SK-N-SH (cell line): ENCODE measurements at regions of chr17 and their contacts with region 1.

Region 1: GRCh38 chr17:18960803-18961511 is 9.0 kb downstream of the SLC5A10 start:
- DNase-seq: peak; percentile 93
- H3K4me3 ChIP-seq: peak overlapping the region in 1 of 2 experiments; percentile 11; a peak in 1 of 4 replicates
- H3K27ac ChIP-seq: no peak overlapping the region
- H3K4me1 ChIP-seq: peaks cover 6 to 11% of the 10 kb centered on the region in 2 experiments; a peak in 2 of 4 replicates
- H3K27me3 ChIP-seq: no peaks in the 10 kb centered on the region
- CTCF ChIP-seq: peak; percentile 94
- EP300 ChIP-seq: no peak
- RAD21 ChIP-seq: peak; percentile 93

Region 2: DNA sequence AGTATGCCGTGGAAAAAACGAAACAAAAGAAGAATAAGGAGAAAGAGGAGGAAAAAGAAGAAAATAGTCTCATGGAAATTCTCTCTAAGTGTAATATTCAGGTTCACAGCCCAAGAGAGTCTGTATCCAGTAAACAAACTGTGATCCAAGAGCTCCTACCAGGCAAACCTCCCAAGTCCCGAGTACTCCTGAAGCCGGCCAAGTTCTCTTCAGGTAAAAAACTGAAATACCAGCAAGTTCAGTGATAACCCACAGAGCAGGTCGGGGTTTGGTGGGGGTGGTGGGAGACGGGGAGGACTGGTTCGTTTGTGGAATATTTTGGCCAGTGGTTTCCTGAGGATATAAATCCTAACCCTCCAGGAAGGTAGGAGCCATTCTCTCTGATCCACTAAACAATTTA is 188.5 kb before region 1 on chr17:
- CTCF ChIA-PET with region 1: no interaction called
- POLR2A ChIA-PET with region 1: no interaction called
- DNase-seq: no peak
- H3K4me3 ChIP-seq: no peak overlapping the region
- H3K27ac ChIP-seq: no peak overlapping the region
- H3K4me1 ChIP-seq: no peaks in the 10 kb centered on the region
- H3K27me3 ChIP-seq: no peaks in the 10 kb centered on the region
- CTCF ChIP-seq: no peak
- EP300 ChIP-seq: no peak
- RAD21 ChIP-seq: no peak

Region 3: DNA sequence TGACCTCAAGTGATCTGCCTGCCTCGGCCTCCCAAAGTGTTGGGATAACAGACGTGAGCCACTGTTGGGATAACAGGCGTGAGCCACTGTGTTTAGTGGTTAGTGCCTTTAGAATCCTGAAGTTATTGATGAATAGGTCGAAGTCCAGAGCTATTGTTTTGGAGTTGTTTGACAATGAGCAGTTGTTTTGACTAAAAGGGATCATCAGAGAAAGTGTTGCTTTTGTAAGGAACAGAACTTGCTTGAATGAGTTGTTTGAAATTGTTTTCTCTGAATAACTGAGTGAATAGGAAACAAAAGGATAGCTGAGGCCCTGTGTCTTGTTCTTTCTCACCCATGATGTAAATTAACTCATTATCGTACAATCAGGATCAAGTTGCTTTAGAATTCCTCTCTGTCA is 56.5 kb before region 1 on chr17:
- CTCF ChIA-PET with region 1: no interaction called
- POLR2A ChIA-PET with region 1: no interaction called
- DNase-seq: no peak
- H3K4me3 ChIP-seq: no peak overlapping the region
- H3K27ac ChIP-seq: no peak overlapping the region
- H3K4me1 ChIP-seq: no peaks in the 10 kb centered on the region
- H3K27me3 ChIP-seq: no peaks in the 10 kb centered on the region
- CTCF ChIP-seq: no peak
- EP300 ChIP-seq: no peak
- RAD21 ChIP-seq: no peak

Region 4: DNA sequence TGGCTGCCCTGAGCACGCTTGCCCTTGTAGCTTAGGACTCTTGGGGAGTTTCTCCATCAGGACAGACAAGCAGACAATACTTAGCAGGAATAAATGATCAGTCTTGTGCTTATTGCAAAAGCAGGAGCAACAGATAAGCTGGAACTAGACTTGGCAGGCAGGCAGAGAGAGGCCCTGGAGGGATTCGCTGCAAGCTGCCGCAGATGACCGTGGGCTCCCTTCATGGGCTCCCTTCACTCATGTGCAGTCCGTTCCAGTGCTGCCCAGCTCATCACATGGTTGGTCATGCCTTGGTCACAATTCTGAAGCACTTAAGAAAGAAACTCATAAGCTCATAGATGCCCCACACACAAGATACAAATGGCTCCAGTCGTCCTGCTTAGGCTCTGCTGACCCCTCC is 11.4 kb before region 1 on chr17:
- CTCF ChIA-PET with region 1: interaction called, 26 read pairs
- POLR2A ChIA-PET with region 1: no interaction called
- DNase-seq: no peak
- H3K4me3 ChIP-seq: no peak overlapping the region
- H3K27ac ChIP-seq: no peak overlapping the region
- H3K4me1 ChIP-seq: peaks cover 0 to 8% of the 10 kb centered on the region in 2 experiments; a peak in 1 of 4 replicates
- H3K27me3 ChIP-seq: no peaks in the 10 kb centered on the region; the same call in 1 of the 2 replicates
- CTCF ChIP-seq: no peak
- EP300 ChIP-seq: no peak
- RAD21 ChIP-seq: no peak

Region 5: GRCh38 chr17:18981642-18982424 is 20.9 kb after region 1 on chr17:
- CTCF ChIA-PET with region 1: interaction called, 34 read pairs
- POLR2A ChIA-PET with region 1: no interaction called
- DNase-seq: no peak
- H3K4me3 ChIP-seq: no peak overlapping the region
- H3K27ac ChIP-seq: peak overlapping the region in 1 of 2 experiments; percentile 63; a peak in 3 of 4 replicates
- H3K4me1 ChIP-seq: peaks cover 0 to 11% of the 10 kb centered on the region in 2 experiments; a peak in 3 of 4 replicates
- H3K27me3 ChIP-seq: no peaks in the 10 kb centered on the region
- CTCF ChIP-seq: no peak
- EP300 ChIP-seq: peak in 1 of 2 experiments; percentile 11; a peak in 1 of 4 replicates
- RAD21 ChIP-seq: no peak

Region 6: GRCh38 chr17:19000531-19001325 is 39.8 kb after region 1 on chr17:
- CTCF ChIA-PET with region 1: interaction called, 14 read pairs
- POLR2A ChIA-PET with region 1: no interaction called
- DNase-seq: peak; percentile 74
- H3K4me3 ChIP-seq: no peak overlapping the region
- H3K27ac ChIP-seq: no peak overlapping the region
- H3K4me1 ChIP-seq: peaks cover 8 to 14% of the 10 kb centered on the region in 2 experiments; a peak in 2 of 4 replicates
- H3K27me3 ChIP-seq: no peaks in the 10 kb centered on the region
- CTCF ChIP-seq: no peak
- EP300 ChIP-seq: no peak
- RAD21 ChIP-seq: no peak